Activated B cell treated with CpG ODN at 0.5 μM for 24 hours (primary cell): ENCODE measurements at regions of chr13 and their contacts with region 1.

Region 1: DNA sequence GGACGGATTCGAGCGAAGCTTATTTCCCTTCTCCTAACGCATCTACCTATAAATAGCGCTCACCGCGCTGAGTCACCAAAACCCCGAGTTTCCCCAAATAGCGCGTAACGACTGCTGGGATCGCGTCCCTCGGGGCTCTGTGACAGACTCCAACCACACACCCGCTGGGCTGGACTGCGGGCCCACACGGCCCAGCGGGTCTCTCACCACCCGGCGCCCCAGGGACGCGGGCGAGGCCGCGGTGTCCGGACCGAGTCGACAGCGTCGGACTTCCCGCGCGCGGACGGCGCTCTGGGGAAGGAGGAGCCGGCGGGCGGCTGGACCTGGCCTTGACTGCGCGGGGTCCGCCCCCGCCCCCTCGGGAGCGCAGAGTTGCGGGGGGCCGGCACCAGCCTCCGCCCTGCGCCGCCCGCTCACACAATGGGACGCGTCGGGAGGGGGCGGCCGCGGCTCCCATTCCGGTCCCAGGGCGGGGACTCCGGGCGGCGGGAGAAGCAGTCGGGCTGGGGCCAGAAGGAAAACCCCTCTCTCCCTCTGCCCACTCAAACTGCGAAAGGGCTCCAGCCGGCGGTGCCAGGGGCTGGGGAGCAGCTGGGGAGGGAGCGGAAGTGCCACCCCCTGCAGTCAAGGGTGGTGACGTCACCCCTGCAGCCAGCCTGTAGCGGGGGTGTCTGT is 108.8 kb downstream of the KCNRG start:
- DNase-seq: peak; percentile 86
- ATAC-seq: peak; percentile 59
- H3K4me3 Mint-ChIP-seq: peak overlapping the region; percentile 87
- H3K27ac Mint-ChIP-seq: peak overlapping the region; percentile 95
- H3K4me1 Mint-ChIP-seq: peaks cover 64% of the 10 kb centered on the region
- H3K27me3 Mint-ChIP-seq: peaks cover 2% of the 10 kb centered on the region
- CTCF ChIP-seq: no peak

Region 2: GRCh38 chr13:49443704-49444523 is 680.1 kb before region 1 on chr13 and contains the starts of genes CAB39L and SETDB2:
- CTCF ChIA-PET with region 1: no interaction called
- POLR2A ChIA-PET with region 1: no interaction called
- intact Hi-C with region 1: loop called (anchors 5 kb)
- DNase-seq: peak; percentile 94
- ATAC-seq: peak; percentile 91
- H3K4me3 Mint-ChIP-seq: peak within 1 kb of the TSS; percentile 94
- H3K27ac Mint-ChIP-seq: peak within 1 kb of the TSS; percentile 99
- H3K4me1 Mint-ChIP-seq: peaks cover 72% of the 10 kb centered on the region
- H3K27me3 Mint-ChIP-seq: no peaks in the 10 kb centered on the region
- CTCF ChIP-seq: no peak
- total RNA-seq, gene CAB39L: 3.4 and 4.0 TPM in 2 replicates
- total RNA-seq, gene SETDB2: 23.6 and 25.1 TPM in 2 replicates

Region 3: DNA sequence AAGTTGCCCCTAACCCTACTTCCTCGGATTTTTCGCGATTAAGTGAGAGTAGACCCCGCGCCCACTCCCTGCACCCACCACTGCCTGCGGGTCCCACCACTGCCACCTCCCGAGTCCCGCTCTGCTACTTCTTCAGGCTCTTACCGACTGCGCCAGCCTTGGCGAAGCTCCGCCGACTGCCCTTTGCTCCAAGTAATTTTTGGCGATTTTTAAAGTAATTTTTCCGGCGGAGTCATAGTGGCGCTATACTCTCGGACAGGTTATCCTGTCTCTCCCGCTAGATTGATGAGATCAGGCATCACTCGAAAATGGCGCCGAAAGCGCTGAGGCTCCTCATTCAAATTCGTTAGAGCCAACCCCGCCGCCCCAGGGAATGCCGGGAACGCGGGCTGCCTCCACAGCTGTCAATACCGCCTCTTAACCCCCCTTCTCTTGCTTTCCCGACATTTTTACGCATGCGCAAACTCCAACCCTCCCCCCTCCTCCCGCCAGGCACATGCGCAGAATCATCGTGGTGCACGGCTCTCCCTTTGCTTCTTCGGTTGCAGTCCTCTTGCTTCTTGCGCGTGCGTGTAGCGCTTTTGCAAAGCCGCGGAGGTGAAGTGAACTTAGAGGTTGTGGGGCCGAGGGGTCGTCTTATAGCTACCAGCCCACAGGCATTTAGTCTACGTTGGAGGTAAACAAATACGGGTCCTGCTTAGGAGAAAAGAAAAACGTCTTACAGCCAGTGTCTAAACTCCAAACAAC is 42.1 kb before region 1 on chr13:
- CTCF ChIA-PET with region 1: interaction called, 41 read pairs
- POLR2A ChIA-PET with region 1: interaction called, 1,044 read pairs
- intact Hi-C with region 1: loop called (anchors 1 kb)
- DNase-seq: peak; percentile 95
- ATAC-seq: peak; percentile 73
- H3K4me3 Mint-ChIP-seq: peak overlapping the region; percentile 100
- H3K27ac Mint-ChIP-seq: peak overlapping the region; percentile 100
- H3K4me1 Mint-ChIP-seq: peaks cover 62% of the 10 kb centered on the region
- H3K27me3 Mint-ChIP-seq: no peaks in the 10 kb centered on the region
- CTCF ChIP-seq: no peak

Region 4: DNA sequence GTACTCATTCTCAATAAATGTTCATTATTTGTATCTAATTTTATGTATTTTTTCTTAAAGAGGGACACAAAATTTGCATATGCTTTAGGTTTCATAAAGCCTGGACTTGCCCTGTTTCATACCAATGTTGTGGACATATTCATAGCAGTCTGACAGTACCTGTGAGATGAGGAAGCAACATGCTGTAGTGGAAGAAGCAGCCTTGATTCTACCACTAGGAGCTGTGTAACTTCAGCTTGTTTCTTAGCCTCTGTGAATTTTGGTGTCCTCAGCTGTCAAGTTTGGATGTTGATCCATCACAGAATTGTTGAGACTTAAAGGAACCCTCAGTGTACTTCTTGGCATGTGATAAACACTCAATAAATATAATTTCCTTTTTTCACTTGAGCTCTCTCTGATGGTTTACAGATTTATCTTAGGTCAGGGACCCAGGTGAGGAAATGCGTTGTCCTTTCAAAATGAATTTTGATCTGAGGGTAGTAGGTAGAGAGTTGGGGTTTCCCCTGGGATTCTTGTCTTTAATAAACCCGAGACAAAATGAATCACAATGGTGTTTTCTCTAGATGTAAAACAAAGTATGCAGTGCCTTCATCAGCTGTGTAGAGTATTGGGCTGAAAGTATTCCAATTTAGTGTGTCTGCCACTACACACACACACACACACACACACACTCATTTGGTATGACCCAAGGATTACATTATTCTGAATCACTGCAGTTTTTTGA is 43.4 kb after region 1 on chr13:
- CTCF ChIA-PET with region 1: no interaction called
- POLR2A ChIA-PET with region 1: interaction called, 31 read pairs
- intact Hi-C with region 1: no loop called
- DNase-seq: no peak
- ATAC-seq: peak; percentile 87
- H3K4me3 Mint-ChIP-seq: no peak overlapping the region
- H3K27ac Mint-ChIP-seq: peak overlapping the region; percentile 66
- H3K4me1 Mint-ChIP-seq: peaks cover 12% of the 10 kb centered on the region
- H3K27me3 Mint-ChIP-seq: no peaks in the 10 kb centered on the region
- CTCF ChIP-seq: no peak

Region 5: GRCh38 chr13:50357586-50358118 is 233.7 kb after region 1 on chr13:
- CTCF ChIA-PET with region 1: no interaction called
- POLR2A ChIA-PET with region 1: interaction called, 10 read pairs
- intact Hi-C with region 1: no loop called
- DNase-seq: no peak
- ATAC-seq: no peak
- H3K4me3 Mint-ChIP-seq: no peak overlapping the region
- H3K27ac Mint-ChIP-seq: no peak overlapping the region
- H3K4me1 Mint-ChIP-seq: peaks cover 55% of the 10 kb centered on the region
- H3K27me3 Mint-ChIP-seq: no peaks in the 10 kb centered on the region
- CTCF ChIP-seq: no peak

Region 6: DNA sequence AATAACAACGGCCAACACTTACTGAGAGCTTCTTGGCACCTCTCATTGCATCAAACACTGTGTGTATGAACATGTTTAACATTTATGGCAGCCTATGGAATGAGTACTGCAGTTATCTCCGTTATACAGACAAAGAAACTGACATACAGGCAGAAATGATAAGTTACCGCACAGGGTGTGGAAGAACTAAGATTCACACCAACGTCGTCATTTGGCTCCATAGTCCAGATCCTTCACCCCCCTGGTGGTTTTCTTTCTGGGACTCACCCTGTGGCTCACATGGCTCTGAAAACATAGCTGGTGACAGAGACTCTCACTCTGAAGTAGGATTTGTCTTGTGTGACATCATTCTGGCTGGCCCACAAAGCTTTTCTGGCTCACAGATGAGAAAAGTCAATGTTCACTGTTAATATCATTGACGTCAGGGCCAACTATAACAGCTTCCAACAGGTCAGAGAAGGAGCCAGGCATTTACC is 489.4 kb after region 1 on chr13:
- CTCF ChIA-PET with region 1: no interaction called
- POLR2A ChIA-PET with region 1: interaction called, 11 read pairs
- intact Hi-C with region 1: no loop called
- DNase-seq: no peak
- ATAC-seq: no peak
- H3K4me3 Mint-ChIP-seq: no peak overlapping the region
- H3K27ac Mint-ChIP-seq: no peak overlapping the region
- H3K4me1 Mint-ChIP-seq: peaks cover 45% of the 10 kb centered on the region
- H3K27me3 Mint-ChIP-seq: no peaks in the 10 kb centered on the region
- CTCF ChIP-seq: no peak

Region 7: GRCh38 chr13:50911937-50912795 is 788.2 kb after region 1 on chr13:
- CTCF ChIA-PET with region 1: interaction called, 23 read pairs
- POLR2A ChIA-PET with region 1: interaction called, 219 read pairs
- intact Hi-C with region 1: loop called (anchors 1 kb)
- DNase-seq: peak; percentile 82
- ATAC-seq: peak; percentile 58
- H3K4me3 Mint-ChIP-seq: peak overlapping the region; percentile 93
- H3K27ac Mint-ChIP-seq: peak overlapping the region; percentile 97
- H3K4me1 Mint-ChIP-seq: peaks cover 71% of the 10 kb centered on the region
- H3K27me3 Mint-ChIP-seq: no peaks in the 10 kb centered on the region
- CTCF ChIP-seq: no peak